ENCODE measurements at regions of chr1 and their contacts with region 1.

Region 1: DNA sequence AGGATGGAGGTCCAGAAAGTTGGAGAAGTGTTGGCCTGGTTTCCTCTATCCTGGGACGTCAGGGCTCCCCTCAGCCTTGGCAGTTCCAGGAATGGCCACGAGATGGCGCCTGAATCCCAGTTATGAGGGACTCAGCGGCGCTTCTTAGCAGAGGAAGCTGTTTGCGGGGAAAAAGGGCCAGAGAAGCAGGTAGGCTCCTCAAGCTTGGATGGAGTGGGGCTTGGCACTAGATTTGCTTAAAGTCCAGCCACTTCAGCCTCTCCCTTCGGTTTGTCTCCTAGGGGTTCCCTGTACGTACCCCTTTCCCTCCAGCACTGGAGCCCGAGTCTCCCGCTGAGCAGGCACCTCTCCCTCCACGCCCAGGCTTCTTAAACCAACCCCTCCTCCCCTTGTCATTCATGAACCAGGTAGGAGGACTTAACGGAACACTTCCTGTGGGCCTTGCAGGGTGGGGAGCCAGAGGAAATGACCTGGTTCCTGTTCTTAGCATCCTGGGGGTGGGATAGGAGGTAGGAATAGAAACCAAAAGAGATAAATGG is 32.0 kb upstream of the TENT5B start:
- DNase-seq: peak; percentile 96
- H3K4me3 Mint-ChIP-seq: peak overlapping the region; percentile 70
- H3K27ac Mint-ChIP-seq: no peak overlapping the region
- H3K4me1 Mint-ChIP-seq: peaks cover 20% of the 10 kb centered on the region
- H3K27me3 Mint-ChIP-seq: no peaks in the 10 kb centered on the region

Region 2: DNA sequence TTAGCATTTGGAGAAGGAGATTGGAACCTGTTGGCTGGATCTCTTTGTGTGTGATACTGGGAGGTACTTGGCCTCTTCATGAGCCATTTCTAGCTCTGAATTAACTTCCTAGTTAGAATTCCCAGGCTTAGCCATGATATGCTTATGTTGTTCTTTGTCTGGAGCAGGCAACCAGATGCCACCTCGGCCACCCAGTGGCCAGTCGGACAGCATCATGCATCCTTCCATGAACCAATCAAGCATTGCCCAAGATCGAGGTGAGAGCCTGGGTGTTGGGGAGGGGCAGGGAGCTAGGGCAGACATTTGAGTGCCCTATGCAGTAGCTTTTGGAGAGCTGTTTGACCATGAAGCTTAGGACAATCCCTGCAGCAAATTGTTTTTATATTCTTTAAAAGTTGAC is 283.5 kb before region 1 on chr1:
- CTCF ChIA-PET with region 1: no interaction called
- intact Hi-C with region 1: no loop called
- DNase-seq: no peak
- H3K4me3 Mint-ChIP-seq: no peak overlapping the region
- H3K27ac Mint-ChIP-seq: no peak overlapping the region
- H3K4me1 Mint-ChIP-seq: peaks cover 7% of the 10 kb centered on the region
- H3K27me3 Mint-ChIP-seq: no peaks in the 10 kb centered on the region

Region 3: DNA sequence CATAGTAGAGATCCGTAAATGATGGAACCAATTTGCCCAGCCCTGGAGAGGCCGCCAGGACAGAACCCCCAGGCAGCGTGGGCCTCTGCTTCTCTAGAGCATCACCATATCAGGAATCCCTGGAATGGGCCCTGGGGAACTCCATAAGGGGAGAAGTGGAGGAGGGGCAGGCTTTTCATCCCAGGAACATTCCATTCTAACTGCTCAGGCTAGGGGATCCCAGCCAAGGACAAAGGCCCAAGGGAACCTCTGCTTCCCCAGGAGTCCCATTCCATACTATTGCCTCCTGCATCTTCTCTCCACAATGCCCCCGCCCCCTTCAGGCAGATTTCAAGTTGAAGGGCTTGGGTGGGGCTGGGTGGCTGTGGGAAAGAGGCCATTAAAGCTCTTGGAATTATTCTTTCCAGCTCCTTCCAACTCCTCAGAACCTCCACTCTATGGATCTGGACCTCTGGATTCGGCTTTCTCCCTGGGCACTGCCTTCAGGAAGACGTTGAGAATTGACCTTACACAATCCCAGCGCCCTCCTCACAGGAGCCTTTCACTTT is 45.2 kb before region 1 on chr1:
- CTCF ChIA-PET with region 1: interaction called, 29 read pairs
- intact Hi-C with region 1: loop called (anchors 1 kb)
- DNase-seq: no peak
- H3K4me3 Mint-ChIP-seq: no peak overlapping the region
- H3K27ac Mint-ChIP-seq: no peak overlapping the region
- H3K4me1 Mint-ChIP-seq: peaks cover 6% of the 10 kb centered on the region
- H3K27me3 Mint-ChIP-seq: peaks cover 26% of the 10 kb centered on the region

Region 4: DNA sequence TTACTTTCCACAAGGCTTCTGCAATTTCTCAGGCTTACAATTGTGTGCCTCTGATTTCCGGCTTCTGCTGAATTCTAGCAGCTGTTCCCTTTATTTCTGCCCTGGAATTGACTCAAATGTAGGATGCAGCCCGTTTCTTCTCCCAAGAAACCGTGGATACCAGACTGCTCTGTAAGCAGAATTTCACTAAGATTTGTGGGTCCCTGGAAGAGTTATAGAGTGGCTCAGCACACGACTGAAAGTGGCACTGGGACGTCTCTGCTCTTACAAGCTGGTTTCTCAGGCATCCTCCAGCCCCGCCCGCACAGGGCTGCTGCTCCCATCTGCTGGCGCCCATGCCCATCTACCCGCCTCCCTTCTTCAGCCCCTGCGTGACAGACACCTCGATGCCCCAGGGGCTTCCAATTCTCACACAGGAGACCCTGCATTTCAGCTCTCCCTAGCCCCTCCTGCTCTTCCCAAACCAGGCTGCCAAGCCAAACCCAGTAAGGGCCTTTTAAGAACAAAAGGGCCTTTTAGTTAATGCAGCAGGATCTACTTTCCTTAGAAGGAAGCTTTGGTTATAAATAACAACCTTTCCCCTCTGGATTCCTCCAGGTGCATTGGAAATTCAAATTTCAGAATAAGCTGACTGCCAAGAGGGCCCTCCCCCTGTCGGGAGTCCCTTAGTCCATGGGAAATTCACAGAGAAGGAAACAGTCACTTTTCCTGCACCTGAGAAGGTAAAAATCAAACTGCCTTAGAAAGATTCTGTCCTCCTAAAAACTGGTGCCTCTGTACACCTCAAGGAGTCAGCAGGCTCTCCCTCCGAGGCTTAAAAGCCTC is 13.3 kb after region 1 on chr1:
- CTCF ChIA-PET with region 1: interaction called, 40 read pairs
- intact Hi-C with region 1: no loop called
- DNase-seq: no peak
- H3K4me3 Mint-ChIP-seq: no peak overlapping the region
- H3K27ac Mint-ChIP-seq: no peak overlapping the region
- H3K4me1 Mint-ChIP-seq: no peaks in the 10 kb centered on the region
- H3K27me3 Mint-ChIP-seq: no peaks in the 10 kb centered on the region

Region 5: GRCh38 chr1:27111626-27112573 is 67.2 kb after region 1 on chr1:
- CTCF ChIA-PET with region 1: interaction called, 22 read pairs
- intact Hi-C with region 1: no loop called
- DNase-seq: peak; percentile 90
- H3K4me3 Mint-ChIP-seq: no peak overlapping the region
- H3K27ac Mint-ChIP-seq: peak overlapping the region; percentile 71
- H3K4me1 Mint-ChIP-seq: peaks cover 50% of the 10 kb centered on the region
- H3K27me3 Mint-ChIP-seq: no peaks in the 10 kb centered on the region

Region 6: GRCh38 chr1:27203946-27204345 is 159.3 kb after region 1 on chr1:
- CTCF ChIA-PET with region 1: no interaction called
- intact Hi-C with region 1: loop called (anchors 2 kb)
- DNase-seq: no peak
- H3K4me3 Mint-ChIP-seq: no peak overlapping the region
- H3K27ac Mint-ChIP-seq: no peak overlapping the region
- H3K4me1 Mint-ChIP-seq: no peaks in the 10 kb centered on the region
- H3K27me3 Mint-ChIP-seq: no peaks in the 10 kb centered on the region

Region 7: DNA sequence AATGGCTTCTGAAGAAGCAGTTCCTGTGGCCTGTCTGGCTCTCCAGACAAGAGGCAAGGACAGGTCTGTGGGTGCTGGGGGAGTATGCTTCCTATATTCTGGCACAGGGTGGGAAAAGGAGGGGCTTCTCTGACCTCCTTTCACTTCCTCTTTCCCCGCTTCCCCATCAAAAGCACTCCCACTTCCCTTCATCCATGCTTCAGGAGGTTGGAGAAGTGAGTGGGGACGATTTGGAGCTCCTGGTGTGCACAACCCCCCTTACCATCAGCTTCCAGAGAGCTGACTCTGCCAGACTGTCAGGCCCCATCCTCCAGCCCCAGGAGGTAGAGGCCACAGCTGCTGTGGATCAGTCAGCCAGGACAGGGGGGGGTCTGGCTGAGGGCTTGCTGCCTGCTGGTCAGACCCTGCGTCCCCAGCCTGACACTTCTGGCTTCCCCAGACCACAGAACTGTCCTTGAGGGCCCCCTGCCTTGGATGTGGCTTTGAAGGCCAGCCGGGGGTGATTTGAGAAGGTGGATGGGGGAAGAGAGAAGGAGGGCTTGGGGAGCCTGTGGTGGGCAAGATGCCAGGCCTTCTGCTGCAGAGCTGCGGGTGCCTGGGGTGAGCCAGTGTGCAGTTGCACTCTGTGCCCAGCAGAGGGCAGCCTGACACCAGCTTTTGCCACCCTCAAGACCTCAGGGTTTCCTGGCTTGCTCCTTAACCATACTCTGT is 255.8 kb after region 1 on chr1:
- CTCF ChIA-PET with region 1: interaction called, 4 read pairs
- intact Hi-C with region 1: loop called (anchors 5 kb)
- DNase-seq: peak; percentile 84
- H3K4me3 Mint-ChIP-seq: no peak overlapping the region
- H3K27ac Mint-ChIP-seq: no peak overlapping the region
- H3K4me1 Mint-ChIP-seq: no peaks in the 10 kb centered on the region
- H3K27me3 Mint-ChIP-seq: no peaks in the 10 kb centered on the region

Measured in activated naive CD4-positive, alpha-beta T cell treated with anti-CD3 and anti-CD28 coated beads for 36 hours (primary cell).